Activated B cell treated with CpG ODN at 0.5 μM for 24 hours (primary cell): ENCODE measurements at regions of chr6 and their contacts with region 1.

Region 1: GRCh38 chr6:26270903-26271667 is 93.9 kb upstream of the BTN3A2 start:
- DNase-seq: peak; percentile 49
- ATAC-seq: peak; percentile 18
- H3K4me3 Mint-ChIP-seq: no peak overlapping the region
- H3K27ac Mint-ChIP-seq: no peak overlapping the region
- H3K4me1 Mint-ChIP-seq: peaks cover 24% of the 10 kb centered on the region
- H3K27me3 Mint-ChIP-seq: no peaks in the 10 kb centered on the region
- CTCF ChIP-seq: no peak

Region 2: GRCh38 chr6:25889877-25890853 is 380.9 kb before region 1 on chr6:
- CTCF ChIA-PET with region 1: no interaction called
- POLR2A ChIA-PET with region 1: no interaction called
- intact Hi-C with region 1: no loop called
- DNase-seq: no peak
- ATAC-seq: no peak
- H3K4me3 Mint-ChIP-seq: no peak overlapping the region
- H3K27ac Mint-ChIP-seq: no peak overlapping the region
- H3K4me1 Mint-ChIP-seq: no peaks in the 10 kb centered on the region
- H3K27me3 Mint-ChIP-seq: peaks cover 9% of the 10 kb centered on the region
- CTCF ChIP-seq: no peak

Region 3: GRCh38 chr6:26054857-26055669 is 216.0 kb before region 1 on chr6:
- CTCF ChIA-PET with region 1: no interaction called
- POLR2A ChIA-PET with region 1: interaction called, 27 read pairs
- intact Hi-C with region 1: no loop called
- DNase-seq: peak; percentile 63
- ATAC-seq: peak; percentile 65
- H3K4me3 Mint-ChIP-seq: peak overlapping the region; percentile 97
- H3K27ac Mint-ChIP-seq: peak overlapping the region; percentile 100
- H3K4me1 Mint-ChIP-seq: peaks cover 20% of the 10 kb centered on the region
- H3K27me3 Mint-ChIP-seq: no peaks in the 10 kb centered on the region
- CTCF ChIP-seq: no peak

Region 4: DNA sequence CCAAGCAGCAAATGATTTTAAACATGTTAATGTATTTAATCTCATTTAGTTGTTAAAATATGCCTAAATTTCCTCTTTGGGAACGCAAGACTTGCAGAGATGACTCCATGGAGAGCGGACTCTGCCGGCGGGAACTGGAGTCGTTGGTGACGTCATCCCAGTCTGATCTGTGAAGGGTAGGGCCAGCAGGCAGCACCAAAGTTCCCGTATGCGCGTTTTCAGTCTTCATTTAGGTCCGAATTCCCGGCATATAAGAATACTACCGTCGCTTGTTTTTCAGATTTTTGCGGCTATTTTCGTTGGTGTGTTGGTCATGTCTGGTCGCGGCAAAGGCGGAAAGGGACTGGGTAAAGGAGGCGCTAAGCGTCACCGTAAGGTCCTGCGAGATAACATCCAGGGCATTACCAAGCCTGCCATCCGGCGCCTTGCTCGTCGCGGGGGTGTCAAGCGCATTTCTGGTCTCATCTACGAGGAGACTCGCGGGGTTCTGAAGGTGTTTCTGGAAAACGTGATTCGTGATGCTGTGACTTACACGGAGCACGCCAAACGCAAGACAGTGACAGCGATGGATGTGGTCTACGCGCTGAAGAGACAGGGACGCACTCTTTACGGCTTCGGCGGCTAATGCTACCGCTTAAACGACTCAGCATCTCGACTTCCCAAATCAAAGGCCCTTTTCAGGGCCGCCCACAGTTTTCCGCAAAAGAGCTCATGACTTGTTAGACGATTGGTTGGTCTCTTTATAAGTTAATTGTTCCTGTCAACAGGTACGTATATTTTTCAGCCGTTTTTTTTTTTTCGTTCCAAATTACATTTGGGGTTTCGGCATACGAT is 66.5 kb before region 1 on chr6:
- CTCF ChIA-PET with region 1: no interaction called
- POLR2A ChIA-PET with region 1: interaction called, 227 read pairs
- intact Hi-C with region 1: loop called (anchors 1 kb)
- DNase-seq: peak; percentile 70
- ATAC-seq: peak; percentile 59
- H3K4me3 Mint-ChIP-seq: no peak overlapping the region
- H3K27ac Mint-ChIP-seq: no peak overlapping the region
- H3K4me1 Mint-ChIP-seq: peaks cover 30% of the 10 kb centered on the region
- H3K27me3 Mint-ChIP-seq: peaks cover 2% of the 10 kb centered on the region
- CTCF ChIP-seq: no peak

Region 5: GRCh38 chr6:26285143-26286134 is 14.4 kb after region 1 on chr6:
- CTCF ChIA-PET with region 1: interaction called, 24 read pairs
- POLR2A ChIA-PET with region 1: interaction called, 340 read pairs
- intact Hi-C with region 1: loop called (anchors 1 kb)
- DNase-seq: peak; percentile 80
- ATAC-seq: peak; percentile 75
- H3K4me3 Mint-ChIP-seq: peak overlapping the region; percentile 86
- H3K27ac Mint-ChIP-seq: peak overlapping the region; percentile 96
- H3K4me1 Mint-ChIP-seq: peaks cover 29% of the 10 kb centered on the region
- H3K27me3 Mint-ChIP-seq: peaks cover 3% of the 10 kb centered on the region
- CTCF ChIP-seq: no peak

Region 6: DNA sequence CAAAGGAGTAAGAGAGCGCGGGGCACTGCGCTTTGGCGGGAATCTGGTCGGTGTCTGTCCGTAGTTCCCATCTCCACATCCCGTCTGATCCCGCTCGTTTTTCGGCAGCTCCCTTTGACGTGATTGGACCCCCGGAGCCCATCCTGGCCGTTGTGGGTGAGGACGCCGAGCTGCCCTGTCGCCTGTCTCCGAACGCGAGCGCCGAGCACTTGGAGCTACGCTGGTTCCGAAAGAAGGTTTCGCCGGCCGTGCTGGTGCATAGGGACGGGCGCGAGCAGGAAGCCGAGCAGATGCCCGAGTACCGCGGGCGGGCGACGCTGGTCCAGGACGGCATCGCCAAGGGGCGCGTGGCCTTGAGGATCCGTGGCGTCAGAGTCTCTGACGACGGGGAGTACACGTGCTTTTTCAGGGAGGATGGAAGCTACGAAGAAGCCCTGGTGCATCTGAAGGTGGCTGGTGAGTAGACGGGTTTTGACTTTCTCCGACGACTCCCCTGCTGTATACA is 230.4 kb after region 1 on chr6:
- CTCF ChIA-PET with region 1: no interaction called
- POLR2A ChIA-PET with region 1: interaction called, 10 read pairs
- intact Hi-C with region 1: no loop called
- DNase-seq: peak; percentile 37
- ATAC-seq: peak; percentile 58
- H3K4me3 Mint-ChIP-seq: peak overlapping the region; percentile 85
- H3K27ac Mint-ChIP-seq: no peak overlapping the region
- H3K4me1 Mint-ChIP-seq: peaks cover 25% of the 10 kb centered on the region
- H3K27me3 Mint-ChIP-seq: peaks cover 2% of the 10 kb centered on the region
- CTCF ChIP-seq: no peak

Region 7: GRCh38 chr6:27146706-27147505 is 875.8 kb after region 1 on chr6:
- CTCF ChIA-PET with region 1: no interaction called
- POLR2A ChIA-PET with region 1: interaction called, 32 read pairs
- intact Hi-C with region 1: loop called (anchors 1 kb)
- DNase-seq: peak; percentile 70
- ATAC-seq: peak; percentile 80
- H3K4me3 Mint-ChIP-seq: no peak overlapping the region
- H3K27ac Mint-ChIP-seq: no peak overlapping the region
- H3K4me1 Mint-ChIP-seq: peaks cover 26% of the 10 kb centered on the region
- H3K27me3 Mint-ChIP-seq: no peaks in the 10 kb centered on the region
- CTCF ChIP-seq: no peak